Endothelial cell of umbilical vein (primary cell): ENCODE measurements at regions of chr1 and their contacts with region 1.

Region 1: DNA sequence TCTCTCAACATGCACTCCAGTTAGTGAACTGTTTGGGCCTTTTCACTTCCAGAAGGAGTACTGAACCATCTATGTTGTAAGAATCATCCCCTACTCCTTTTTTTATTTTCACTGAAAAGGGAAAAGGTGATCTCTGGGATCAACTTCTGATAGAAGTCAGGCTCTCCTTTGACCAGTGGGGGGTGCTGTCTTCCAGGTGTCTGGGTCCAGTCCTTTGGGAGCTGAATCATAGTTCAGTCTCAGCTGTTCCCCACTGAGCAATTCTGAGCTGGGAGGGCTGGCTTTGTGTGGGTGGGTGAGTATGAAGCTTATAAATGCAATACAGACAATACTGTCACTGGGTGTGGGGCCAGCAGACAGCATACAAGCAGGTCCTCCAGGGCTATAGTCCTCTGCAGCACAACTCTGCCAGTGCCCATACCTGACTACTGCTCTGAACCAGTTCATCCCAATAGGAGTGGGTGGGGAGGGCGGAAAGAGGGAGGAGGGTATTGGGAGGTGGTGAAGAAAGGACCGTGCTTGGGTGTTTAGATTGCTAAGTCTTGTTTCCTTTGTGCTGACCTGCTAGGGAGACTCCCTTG is 12.5 kb upstream of the SARS1 start:
- DNase-seq: peak; percentile 37
- H3K4me3 ChIP-seq: no peak overlapping the region
- H3K27ac ChIP-seq: no peak overlapping the region
- H3K4me1 ChIP-seq: peaks cover 17% of the 10 kb centered on the region
- H3K27me3 ChIP-seq: no peaks in the 10 kb centered on the region
- CTCF ChIP-seq: peak; percentile 57 to 68
- POLR2A ChIP-seq: no peak

Region 2: GRCh38 chr1:108732398-108732797 is 468.8 kb before region 1 on chr1:
- CTCF ChIA-PET with region 1: no interaction called
- POLR2A ChIA-PET with region 1: no interaction called
- dilution Hi-C with region 1: no loop called
- intact Hi-C with region 1: no loop called
- DNase-seq: no peak
- H3K4me3 ChIP-seq: no peak overlapping the region
- H3K27ac ChIP-seq: no peak overlapping the region
- H3K4me1 ChIP-seq: no peaks in the 10 kb centered on the region
- H3K27me3 ChIP-seq: peaks cover 3 to 16% of the 10 kb centered on the region in 2 experiments
- CTCF ChIP-seq: no peak
- POLR2A ChIP-seq: no peak

Region 3: DNA sequence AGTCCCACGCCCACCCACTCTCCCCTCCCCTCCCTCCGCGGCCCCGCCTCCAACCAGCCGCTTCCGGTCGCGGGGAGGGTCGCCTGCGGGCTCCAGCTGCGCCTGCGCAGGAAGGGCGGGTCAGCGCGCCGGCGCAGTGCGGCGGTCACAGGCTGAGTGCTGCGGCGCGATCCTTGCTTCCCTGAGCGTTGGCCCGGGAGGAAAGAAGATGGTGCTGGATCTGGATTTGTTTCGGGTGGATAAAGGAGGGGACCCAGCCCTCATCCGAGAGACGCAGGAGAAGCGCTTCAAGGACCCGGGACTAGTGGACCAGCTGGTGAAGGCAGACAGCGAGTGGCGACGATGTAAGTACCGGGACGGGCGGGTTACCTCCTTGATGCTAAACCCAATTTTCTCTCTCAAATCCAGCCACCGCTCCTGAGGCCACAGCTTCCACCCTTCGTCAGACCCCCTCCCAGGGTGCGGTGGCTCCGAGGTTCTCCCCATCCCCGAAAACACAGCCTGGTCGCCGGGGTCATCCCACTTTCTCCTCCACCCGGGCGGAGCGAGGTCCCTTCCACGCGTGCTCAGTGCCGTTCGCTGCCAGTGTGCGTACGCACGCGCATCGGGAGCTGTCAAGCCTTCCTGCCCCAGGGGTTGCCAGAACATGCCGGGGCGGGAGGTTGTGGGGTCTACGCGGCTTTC is 12.7 kb after region 1 on chr1 and contains the start of gene SARS1:
- CTCF ChIA-PET with region 1: interaction called, 21 read pairs
- POLR2A ChIA-PET with region 1: interaction called, 3 read pairs
- dilution Hi-C with region 1: no loop called
- intact Hi-C with region 1: loop called (anchors 1 kb)
- DNase-seq: peak; percentile 91
- H3K4me3 ChIP-seq: peak within 1 kb of the TSS; percentile 55 to 100 (median 94)
- H3K27ac ChIP-seq: peak within 1 kb of the TSS; percentile 76
- H3K4me1 ChIP-seq: peaks cover 20% of the 10 kb centered on the region
- H3K27me3 ChIP-seq: peaks cover 0 to 2% of the 10 kb centered on the region in 2 experiments
- CTCF ChIP-seq: no peak
- POLR2A ChIP-seq: peak; percentile 88
- total RNA-seq, gene SARS1: 176 and 178 TPM in 2 replicates

Region 4: DNA sequence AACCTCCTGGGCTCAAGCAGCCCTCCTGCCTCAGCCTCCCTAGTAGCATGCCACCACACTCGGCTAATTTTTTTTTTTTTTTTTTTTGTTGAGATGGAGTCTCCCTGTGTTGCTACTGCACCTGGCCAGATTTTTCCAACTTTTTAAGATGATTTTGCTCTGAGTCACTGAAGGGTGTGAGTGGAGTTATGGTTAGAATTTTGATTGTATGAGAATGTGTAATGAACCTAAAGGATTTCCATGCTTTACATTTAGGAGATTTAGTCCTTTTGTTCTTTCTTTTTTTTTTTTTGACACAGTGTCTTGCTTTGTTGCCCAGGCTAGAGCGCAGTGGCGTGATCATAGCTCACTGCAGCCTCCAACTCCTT is 24.8 kb after region 1 on chr1:
- CTCF ChIA-PET with region 1: interaction called, 20 read pairs
- POLR2A ChIA-PET with region 1: no interaction called
- dilution Hi-C with region 1: no loop called
- intact Hi-C with region 1: no loop called
- DNase-seq: no peak
- H3K4me3 ChIP-seq: no peak overlapping the region
- H3K27ac ChIP-seq: no peak overlapping the region
- H3K4me1 ChIP-seq: no peaks in the 10 kb centered on the region
- H3K27me3 ChIP-seq: no peaks in the 10 kb centered on the region
- CTCF ChIP-seq: no peak
- POLR2A ChIP-seq: no peak

Region 5: DNA sequence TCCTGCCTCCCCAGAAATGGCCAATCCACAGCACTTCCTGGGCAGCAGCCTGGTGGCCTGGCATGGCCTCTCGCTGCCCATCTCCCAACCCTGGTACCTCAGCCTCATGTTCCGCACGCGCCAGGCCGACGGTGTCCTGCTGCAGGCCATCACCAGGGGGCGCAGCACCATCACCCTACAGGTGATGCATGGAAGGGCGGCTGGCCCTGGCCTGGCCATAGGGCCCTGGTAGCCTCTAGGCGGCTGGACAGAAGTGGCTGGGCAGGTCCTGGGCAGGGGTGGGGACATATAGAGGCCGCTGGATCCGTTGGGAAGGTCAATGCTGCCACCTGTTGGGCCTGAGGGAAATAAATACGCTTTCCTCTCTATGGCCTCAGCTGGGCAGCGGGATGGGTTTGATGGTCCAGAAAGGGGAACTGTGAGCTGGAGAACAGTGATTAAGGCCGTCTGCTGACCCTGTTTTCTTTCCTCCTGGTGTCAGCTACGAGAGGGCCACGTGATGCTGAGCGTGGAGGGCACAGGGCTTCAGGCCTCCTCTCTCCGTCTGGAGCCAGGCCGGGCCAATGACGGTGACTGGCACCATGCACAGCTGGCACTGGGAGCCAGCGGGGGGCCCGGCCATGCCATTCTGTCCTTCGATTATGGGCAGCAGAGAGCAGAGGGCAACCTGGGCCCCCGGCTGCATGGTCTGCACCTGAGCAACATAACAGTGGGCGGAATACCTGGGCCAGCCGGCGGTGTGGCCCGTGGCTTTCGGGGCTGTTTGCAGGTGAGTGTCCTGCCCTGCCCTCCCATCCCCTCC is 62.6 kb after region 1 on chr1:
- CTCF ChIA-PET with region 1: interaction called, 5 read pairs
- POLR2A ChIA-PET with region 1: no interaction called
- dilution Hi-C with region 1: no loop called
- intact Hi-C with region 1: loop called (anchors 1 kb)
- DNase-seq: peak; percentile 82
- H3K4me3 ChIP-seq: no peak overlapping the region
- H3K27ac ChIP-seq: no peak overlapping the region
- H3K4me1 ChIP-seq: no peaks in the 10 kb centered on the region
- H3K27me3 ChIP-seq: no peaks in the 10 kb centered on the region
- CTCF ChIP-seq: peak; percentile 100
- POLR2A ChIP-seq: no peak